ENCODE measurements at regions of chr3 and their contacts with region 1.

Region 1: GRCh38 chr3:141632779-141633374 is 105.2 kb upstream of the RNF7 start:
- DNase-seq: no peak
- H3K4me3 ChIP-seq: no peak overlapping the region
- CTCF ChIP-seq: no peak

Region 2: GRCh38 chr3:141644931-141645330 is 12.1 kb after region 1 on chr3:
- CTCF ChIA-PET with region 1: interaction called, 15 read pairs
- POLR2A ChIA-PET with region 1: no interaction called
- DNase-seq: no peak
- H3K4me3 ChIP-seq: no peak overlapping the region
- CTCF ChIP-seq: peak; percentile 47

Measured in AG04449 (cell line).